ENCODE measurements at regions of chr11 and their contacts with region 1.

Region 1: DNA sequence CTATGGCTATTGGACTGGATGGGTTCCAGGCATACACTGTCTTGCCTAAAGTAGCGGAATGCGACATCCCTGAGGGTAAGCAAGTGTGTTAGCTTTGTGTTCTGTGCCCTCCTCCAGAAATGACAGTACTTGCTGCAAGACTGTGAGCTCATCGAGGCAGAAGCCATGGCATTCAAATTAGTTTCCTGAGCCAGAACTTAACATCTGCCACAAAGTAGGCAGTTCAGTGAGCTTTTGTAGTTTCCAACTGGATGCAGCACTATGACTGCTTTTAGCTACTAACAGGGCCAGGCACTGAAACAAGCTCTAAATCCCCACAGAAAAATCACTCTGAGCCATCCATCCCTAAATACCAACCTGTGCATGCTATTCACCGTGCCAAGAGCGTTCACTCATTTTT is 1.2 kb upstream of the FAR1 start:
- DNase-seq: peak in 1 of 35 experiments; percentile 11
- ATAC-seq: no peak
- H3K4me3 ChIP-seq: peak overlapping the region; percentile 71 to 81
- H3K4me3 Mint-ChIP-seq: peak overlapping the region; percentile 84 to 97 (median 85)
- H3K27ac ChIP-seq: no peak overlapping the region
- H3K27ac Mint-ChIP-seq: peak overlapping the region in 1 of 2 donors; percentile 83
- H3K4me1 ChIP-seq: peaks cover 11 to 24% of the 10 kb centered on the region in 2 experiments
- H3K4me1 Mint-ChIP-seq: peaks cover 36 to 45% (median 36%) of the 10 kb centered on the region in 3 donors
- H3K27me3 ChIP-seq: peaks cover 0 to 6% of the 10 kb centered on the region in 2 experiments
- H3K27me3 Mint-ChIP-seq: peaks cover 8 to 19% of the 10 kb centered on the region in 2 donors

Region 2: GRCh38 chr11:13183094-13183825 is 484.0 kb before region 1 on chr11:
- CTCF ChIA-PET with region 1: interaction called in 1 of 2 experiments, 12 read pairs
- POLR2A ChIA-PET with region 1: no interaction called
- DNase-seq: peak in 2 of 35 experiments; percentile 4 to 49
- ATAC-seq: peak in 1 of 4 experiments; percentile 32
- H3K4me3 ChIP-seq: no peak overlapping the region
- H3K4me3 Mint-ChIP-seq: peak overlapping the region; percentile 6 to 44 (median 17)
- H3K27ac ChIP-seq: no peak overlapping the region
- H3K27ac Mint-ChIP-seq: no peak overlapping the region
- H3K4me1 ChIP-seq: no peaks in the 10 kb centered on the region
- H3K4me1 Mint-ChIP-seq: peaks cover 0 to 7% (median 7%) of the 10 kb centered on the region in 3 donors
- H3K27me3 ChIP-seq: peaks cover 0 to 10% of the 10 kb centered on the region in 2 experiments
- H3K27me3 Mint-ChIP-seq: peaks cover 9 to 10% of the 10 kb centered on the region in 2 donors